ENCODE measurements at regions of chr17 and their contacts with region 1.

Region 1: GRCh38 chr17:18904482-18904881 is 46.6 kb downstream of the PRPSAP2 start:
- DNase-seq: no peak
- H3K4me3 ChIP-seq: no peak overlapping the region
- H3K27ac ChIP-seq: peak overlapping the region in 55 of 59 donors; percentile 7 to 83 (median 62)
- H3K27me3 ChIP-seq: no peaks in the 10 kb centered on the region
- CTCF ChIP-seq: no peak

Region 2: DNA sequence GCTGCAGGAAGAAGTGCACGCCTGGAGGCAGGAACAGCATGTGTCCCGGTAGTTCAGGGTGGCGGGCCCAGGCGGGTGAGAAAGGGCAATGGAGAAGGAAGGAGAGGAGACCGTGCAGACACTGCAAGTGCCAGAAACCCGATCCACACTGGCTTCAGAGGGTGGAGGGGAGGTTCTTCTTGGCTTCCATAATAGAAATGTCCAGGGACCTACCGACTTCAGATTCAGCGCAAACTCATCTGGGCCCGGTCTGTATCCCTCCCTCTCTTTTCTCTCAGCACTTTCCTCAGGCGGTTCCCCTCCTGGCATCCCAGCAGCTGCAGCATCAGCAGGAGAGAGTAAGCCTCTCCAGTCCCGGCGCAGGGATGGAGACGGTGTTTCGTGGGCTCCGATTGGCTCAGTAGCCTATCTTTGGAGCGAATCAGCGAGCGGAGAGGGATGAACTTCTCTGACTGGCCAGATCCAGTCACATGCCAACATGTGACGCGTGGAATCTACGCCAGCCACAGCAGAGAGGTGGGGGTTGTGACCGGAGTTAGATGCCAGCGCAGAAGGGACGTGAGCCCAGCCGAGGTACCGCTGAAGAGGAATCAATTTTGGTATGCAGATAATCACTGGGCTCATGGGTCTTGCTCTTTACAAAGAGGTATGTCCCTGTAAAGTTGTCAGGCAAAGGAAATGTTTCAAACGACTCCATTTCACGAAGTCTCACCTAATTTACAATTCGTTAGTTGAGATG is 48.5 kb before region 1 on chr17:
- intact Hi-C with region 1: loop called (anchors 5 to 10 kb)
- DNase-seq: peak; percentile 85 to 96 (median 95)
- H3K4me3 ChIP-seq: peak overlapping the region; percentile 59 to 97 (median 77)
- H3K27ac ChIP-seq: peak overlapping the region; percentile 61 to 99 (median 93)
- H3K27me3 ChIP-seq: no peaks in the 10 kb centered on the region
- CTCF ChIP-seq: peak in 20 of 56 donors; percentile 2 to 50 (median 18)

Region 3: GRCh38 chr17:18981642-18982424 is 77.4 kb after region 1 on chr17:
- intact Hi-C with region 1: no loop called
- DNase-seq: no peak
- H3K4me3 ChIP-seq: no peak overlapping the region
- H3K27ac ChIP-seq: no peak overlapping the region
- H3K27me3 ChIP-seq: no peaks in the 10 kb centered on the region
- CTCF ChIP-seq: no peak